IMR-90 (cell line): ENCODE measurements at regions of chr10 and their contacts with region 1.

Region 1: DNA sequence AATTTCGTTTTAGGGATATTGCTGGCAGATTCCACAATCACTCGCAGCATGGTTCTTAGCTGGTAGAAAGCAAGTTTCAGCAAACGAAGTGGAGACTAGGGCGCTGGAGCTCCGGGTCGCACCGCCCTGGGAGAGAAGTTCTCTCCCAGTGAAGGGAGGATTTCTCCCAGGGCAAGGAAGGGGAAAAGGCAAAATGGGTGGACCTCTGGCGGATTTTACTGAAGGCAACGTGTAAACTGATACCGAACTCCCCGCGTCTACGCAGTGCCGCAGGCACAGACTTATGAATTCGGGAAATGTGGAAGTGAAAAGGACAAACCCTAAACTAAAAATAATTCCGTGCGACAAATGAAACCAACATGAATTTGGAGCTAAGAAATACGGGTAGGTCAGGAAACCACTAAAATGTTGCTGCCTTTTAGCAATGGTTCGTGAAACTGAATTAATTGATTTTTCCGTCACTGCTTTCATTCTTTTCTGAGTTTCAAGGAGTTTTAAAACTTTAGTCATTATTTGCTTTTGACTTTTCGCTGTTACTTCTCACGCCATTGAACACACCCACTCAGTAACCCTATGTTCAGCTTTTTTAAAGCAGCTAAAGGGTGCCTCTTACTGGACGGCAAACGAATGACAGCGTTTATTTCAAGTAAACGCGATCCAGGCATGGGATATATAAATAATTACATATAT is at the start of gene MYOF:
- DNase-seq: peak; percentile 93
- ATAC-seq: peak; percentile 83
- H3K4me3 ChIP-seq: peak within 1 kb of the TSS; percentile 97
- H3K27ac ChIP-seq: peak within 1 kb of the TSS; percentile 100
- H3K4me1 ChIP-seq: peaks cover 10% of the 10 kb centered on the region
- H3K27me3 ChIP-seq: no peaks in the 10 kb centered on the region
- CTCF ChIP-seq: peak; percentile 83
- POLR2A ChIP-seq: peak; percentile 84
- RAD21 ChIP-seq: peak; percentile 92
- total RNA-seq, gene MYOF: 281 and 332 TPM in 2 replicates

Region 2: DNA sequence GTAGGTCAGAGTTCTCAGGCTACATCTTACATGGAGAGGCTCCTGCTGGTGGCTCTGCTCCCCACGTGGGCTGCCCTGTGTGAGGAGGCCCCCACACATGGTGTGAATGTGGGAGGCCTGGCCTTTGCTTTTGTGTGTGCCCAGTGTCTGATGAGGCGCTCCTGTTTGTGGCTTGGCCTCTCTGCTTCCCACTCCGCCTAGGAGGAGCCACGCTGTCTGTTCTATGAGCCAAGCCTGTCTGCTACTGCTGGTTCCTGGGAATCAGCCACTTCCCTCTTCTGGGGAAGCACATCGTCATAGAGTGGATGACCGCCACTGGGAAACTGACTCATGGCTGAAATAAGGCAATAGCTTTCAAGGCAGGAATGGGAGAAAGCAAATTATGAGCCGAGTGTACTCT is 321.5 kb before region 1 on chr10:
- CTCF ChIA-PET with region 1: no interaction called
- POLR2A ChIA-PET with region 1: no interaction called
- dilution Hi-C with region 1: no loop called
- in situ Hi-C with region 1: no loop called
- intact Hi-C with region 1: no loop called
- DNase-seq: peak; percentile 39
- ATAC-seq: peak; percentile 17; the same call in 1 of the 2 replicates
- H3K4me3 ChIP-seq: no peak overlapping the region
- H3K27ac ChIP-seq: no peak overlapping the region
- H3K4me1 ChIP-seq: no peaks in the 10 kb centered on the region
- H3K27me3 ChIP-seq: no peaks in the 10 kb centered on the region
- CTCF ChIP-seq: no peak
- POLR2A ChIP-seq: no peak
- RAD21 ChIP-seq: no peak

Region 3: DNA sequence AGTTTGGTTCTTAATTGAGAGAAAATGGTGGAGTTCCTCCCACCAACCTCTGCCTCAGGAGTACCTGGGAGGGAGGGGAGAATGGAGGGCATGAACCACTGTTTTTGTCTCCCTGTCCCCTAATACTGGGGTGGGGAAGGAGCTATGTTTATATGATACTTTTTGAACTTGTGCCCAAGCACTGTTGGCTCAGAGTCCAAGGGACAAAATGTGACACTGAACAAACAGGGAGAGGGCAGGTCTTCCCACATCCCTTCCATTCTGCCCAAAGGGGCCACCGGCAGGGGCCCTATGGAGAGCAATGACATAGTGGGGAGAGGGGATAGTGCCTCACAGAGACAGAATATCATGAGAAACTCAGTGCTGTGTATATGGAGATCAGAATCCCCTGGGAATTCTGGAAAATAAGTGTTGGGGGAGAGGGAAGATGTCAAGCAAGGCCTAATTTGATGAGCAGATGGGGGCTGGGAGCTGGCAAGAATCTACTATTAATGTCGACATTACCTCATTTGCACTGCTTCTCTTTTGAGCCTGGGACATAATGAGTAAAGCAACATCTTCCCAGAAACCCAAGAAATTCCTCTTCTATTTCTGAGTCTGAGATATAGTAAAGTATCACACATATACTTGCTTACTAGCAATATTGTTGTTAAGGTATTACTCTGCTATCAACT is 228.0 kb before region 1 on chr10:
- CTCF ChIA-PET with region 1: no interaction called
- POLR2A ChIA-PET with region 1: no interaction called
- dilution Hi-C with region 1: no loop called
- in situ Hi-C with region 1: no loop called
- intact Hi-C with region 1: no loop called
- DNase-seq: no peak
- ATAC-seq: no peak
- H3K4me3 ChIP-seq: no peak overlapping the region
- H3K27ac ChIP-seq: no peak overlapping the region
- H3K4me1 ChIP-seq: no peaks in the 10 kb centered on the region
- H3K27me3 ChIP-seq: peaks cover 5% of the 10 kb centered on the region
- CTCF ChIP-seq: no peak
- POLR2A ChIP-seq: no peak
- RAD21 ChIP-seq: no peak

Region 4: DNA sequence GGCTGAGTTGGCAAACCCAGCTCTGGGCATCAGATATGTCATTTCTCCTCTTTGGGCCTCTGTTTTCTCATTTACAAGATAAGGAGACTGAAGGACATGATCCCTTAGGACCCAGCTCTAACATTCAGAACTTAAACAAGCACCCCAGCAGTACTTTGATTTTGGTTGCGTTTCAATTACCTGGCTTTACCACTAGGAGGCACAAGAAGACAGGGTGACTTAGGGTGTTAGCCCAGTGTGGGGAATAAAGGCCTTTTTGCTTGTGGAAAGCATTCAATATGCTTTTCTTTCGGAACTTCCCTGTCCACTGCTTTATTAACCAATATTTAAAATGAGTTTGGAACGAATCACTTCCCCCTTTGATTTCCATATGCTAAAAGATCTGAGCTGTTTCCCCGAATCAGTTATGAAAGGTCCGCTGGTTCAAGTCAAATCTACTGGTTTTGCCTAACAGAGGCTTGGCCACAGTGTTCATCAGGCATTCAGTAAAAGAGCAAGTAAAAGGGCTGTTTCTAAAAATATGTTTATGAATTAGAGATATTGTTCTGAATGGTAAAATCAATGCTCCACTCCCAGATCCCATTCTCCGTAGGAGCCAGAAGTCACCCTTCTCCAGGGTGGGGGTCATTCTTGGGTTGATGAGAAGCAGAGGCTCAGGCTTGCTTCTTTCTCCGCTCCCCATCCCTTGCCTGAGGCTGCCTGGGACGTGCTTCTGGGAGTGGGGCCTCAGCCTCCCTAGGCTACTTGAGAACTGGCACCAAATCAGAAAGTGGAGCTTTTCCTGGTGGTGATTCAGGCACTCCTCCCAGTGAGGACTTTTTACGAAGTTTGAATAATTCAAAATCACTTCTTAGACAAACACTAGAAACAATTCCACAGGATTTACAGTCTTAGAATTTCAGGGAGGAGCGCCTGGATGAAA is 105.7 kb before region 1 on chr10:
- CTCF ChIA-PET with region 1: interaction called, 39 read pairs
- POLR2A ChIA-PET with region 1: interaction called, 8 read pairs
- dilution Hi-C with region 1: no loop called
- in situ Hi-C with region 1: loop called (anchors 5 kb)
- intact Hi-C with region 1: loop called (anchors 1 kb)
- DNase-seq: peak; percentile 90
- ATAC-seq: peak; percentile 77
- H3K4me3 ChIP-seq: no peak overlapping the region
- H3K27ac ChIP-seq: peak overlapping the region; percentile 86
- H3K4me1 ChIP-seq: peaks cover 14% of the 10 kb centered on the region
- H3K27me3 ChIP-seq: no peaks in the 10 kb centered on the region
- CTCF ChIP-seq: peak; percentile 94
- POLR2A ChIP-seq: peak; percentile 66; the same call in 1 of the 2 replicates
- RAD21 ChIP-seq: peak; percentile 97

Region 5: GRCh38 chr10:93420091-93420490 is 62.2 kb before region 1 on chr10:
- CTCF ChIA-PET with region 1: interaction called, 3 read pairs
- POLR2A ChIA-PET with region 1: interaction called, 19 read pairs
- dilution Hi-C with region 1: no loop called
- in situ Hi-C with region 1: no loop called
- intact Hi-C with region 1: no loop called
- DNase-seq: peak; percentile 35
- ATAC-seq: no peak
- H3K4me3 ChIP-seq: no peak overlapping the region
- H3K27ac ChIP-seq: no peak overlapping the region
- H3K4me1 ChIP-seq: peaks cover 10% of the 10 kb centered on the region
- H3K27me3 ChIP-seq: no peaks in the 10 kb centered on the region
- CTCF ChIP-seq: no peak
- POLR2A ChIP-seq: no peak
- RAD21 ChIP-seq: no peak

Region 6: DNA sequence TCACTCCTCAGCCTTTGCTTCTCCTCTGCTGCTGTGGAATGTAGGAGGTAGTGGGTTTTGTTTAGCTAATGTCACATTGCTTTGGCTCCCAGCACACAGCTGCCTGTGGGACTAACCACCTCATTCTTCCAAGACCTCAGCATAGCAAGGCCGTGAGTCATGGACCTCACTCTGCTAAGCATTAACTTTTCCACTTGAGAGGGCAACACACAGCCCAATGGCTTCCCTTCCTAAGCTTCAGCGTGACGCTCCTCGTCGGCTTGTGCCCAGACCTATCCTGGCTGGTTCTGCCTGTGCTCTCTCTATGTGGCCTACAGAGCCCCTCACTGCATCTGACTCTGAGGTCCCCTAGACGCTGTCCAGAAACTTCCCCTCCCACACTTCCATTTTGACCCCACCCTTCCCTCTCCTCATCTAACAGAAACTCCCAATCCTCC is 23.5 kb before region 1 on chr10:
- CTCF ChIA-PET with region 1: interaction called, 21 read pairs
- POLR2A ChIA-PET with region 1: interaction called, 5 read pairs
- dilution Hi-C with region 1: no loop called
- in situ Hi-C with region 1: no loop called
- intact Hi-C with region 1: loop called (anchors 1 kb)
- DNase-seq: peak; percentile 100
- ATAC-seq: peak; percentile 88
- H3K4me3 ChIP-seq: no peak overlapping the region
- H3K27ac ChIP-seq: peak overlapping the region; percentile 93
- H3K4me1 ChIP-seq: peaks cover 38% of the 10 kb centered on the region
- H3K27me3 ChIP-seq: no peaks in the 10 kb centered on the region
- CTCF ChIP-seq: no peak
- POLR2A ChIP-seq: peak; percentile 81; the same call in 1 of the 2 replicates
- RAD21 ChIP-seq: peak; percentile 25

Region 7: DNA sequence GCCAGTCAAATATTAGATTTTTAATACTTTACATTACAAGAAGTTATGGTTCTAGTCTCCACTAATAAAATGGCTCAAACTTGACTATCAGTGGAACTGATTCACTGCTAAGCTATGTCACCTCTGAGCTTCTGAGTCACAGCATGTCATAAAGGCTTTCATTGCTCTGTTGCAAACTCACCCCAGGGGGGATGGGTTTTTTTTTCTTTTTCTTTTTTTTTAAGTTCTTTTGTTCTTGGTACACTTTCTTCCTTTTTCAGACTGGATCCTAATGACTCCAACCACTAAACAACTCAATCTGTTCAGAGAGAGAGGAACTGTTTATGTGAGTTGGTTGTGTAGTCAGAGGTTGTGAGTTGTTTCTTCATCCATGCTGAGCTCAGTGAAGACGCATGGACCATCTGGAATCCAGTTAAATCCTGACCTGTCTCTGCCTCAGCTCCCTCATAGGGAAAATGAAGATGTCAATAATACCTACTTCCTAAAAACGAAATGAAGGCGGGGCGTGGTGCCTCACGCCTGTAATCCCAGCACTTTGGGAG is 11.1 kb before region 1 on chr10:
- CTCF ChIA-PET with region 1: interaction called, 21 read pairs
- POLR2A ChIA-PET with region 1: interaction called, 5 read pairs
- dilution Hi-C with region 1: no loop called
- in situ Hi-C with region 1: no loop called
- intact Hi-C with region 1: no loop called
- DNase-seq: peak; percentile 97
- ATAC-seq: peak; percentile 55
- H3K4me3 ChIP-seq: no peak overlapping the region
- H3K27ac ChIP-seq: peak overlapping the region; percentile 99
- H3K4me1 ChIP-seq: peaks cover 37% of the 10 kb centered on the region
- H3K27me3 ChIP-seq: no peaks in the 10 kb centered on the region
- CTCF ChIP-seq: no peak
- POLR2A ChIP-seq: 0 out of 2 replicates have a peak, but pooled peaks have one; percentile 26
- RAD21 ChIP-seq: no peak